Mammary epithelial cell (primary cell): ENCODE measurements at regions of chr5 and their contacts with region 1.

Region 1: DNA sequence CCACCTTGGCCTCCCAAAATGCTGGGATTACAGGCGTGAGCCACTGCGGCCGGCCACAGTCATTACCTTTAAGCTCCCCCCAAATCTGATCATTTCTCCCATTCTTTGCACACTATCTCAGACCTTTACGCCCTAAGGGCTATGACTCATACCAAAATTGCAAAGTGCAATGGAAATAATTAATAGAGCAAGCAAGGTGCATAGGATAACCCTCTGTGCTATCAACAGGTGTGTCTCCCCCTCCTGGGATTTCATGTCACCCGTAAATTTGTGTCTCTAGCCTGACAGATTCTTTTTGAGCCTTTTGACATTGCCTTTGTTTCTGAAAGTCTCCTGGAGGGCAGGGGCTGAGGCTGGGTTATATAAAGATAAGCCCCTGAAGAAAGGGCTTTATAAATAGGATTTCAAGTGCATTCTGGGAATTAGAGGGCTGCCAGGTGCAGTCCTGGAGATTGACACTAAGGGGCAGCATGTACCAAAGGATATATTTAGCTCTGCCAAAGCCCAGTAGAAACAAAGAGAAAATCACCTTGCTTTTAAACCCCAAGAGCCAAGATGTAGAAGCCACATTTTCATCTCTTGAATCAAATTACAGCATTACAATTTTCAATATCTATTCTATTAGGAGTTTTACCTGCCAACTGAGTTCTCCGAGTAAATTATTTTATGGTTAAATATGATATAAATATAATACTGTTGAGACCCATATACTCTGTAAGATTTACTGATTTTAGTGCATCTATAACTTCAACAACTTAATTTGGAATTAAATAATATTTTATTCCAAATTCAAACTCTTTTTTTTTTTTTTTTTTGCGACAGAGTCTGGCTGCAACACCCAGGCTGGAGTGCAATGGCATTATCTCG is 18.2 kb downstream of the S100Z start:
- DNase-seq: peak; percentile 50
- H3K4me3 ChIP-seq: no peak overlapping the region
- H3K27ac ChIP-seq: no peak overlapping the region
- H3K4me1 ChIP-seq: no peaks in the 10 kb centered on the region
- H3K27me3 ChIP-seq: no peaks in the 10 kb centered on the region
- CTCF ChIP-seq: peak; percentile 78 to 86

Region 2: GRCh38 chr5:76601470-76601869 is 266.6 kb before region 1 on chr5:
- CTCF ChIA-PET with region 1: no interaction called
- dilution Hi-C with region 1: no loop called
- in situ Hi-C with region 1: no loop called
- intact Hi-C with region 1: loop called (anchors 5 kb)
- DNase-seq: peak; percentile 46
- H3K4me3 ChIP-seq: no peak overlapping the region
- H3K27ac ChIP-seq: no peak overlapping the region
- H3K4me1 ChIP-seq: no peaks in the 10 kb centered on the region
- H3K27me3 ChIP-seq: no peaks in the 10 kb centered on the region
- CTCF ChIP-seq: peak; percentile 58 to 74

Region 3: GRCh38 chr5:76805850-76806505 is 62.1 kb before region 1 on chr5:
- CTCF ChIA-PET with region 1: no interaction called
- dilution Hi-C with region 1: no loop called
- in situ Hi-C with region 1: no loop called
- intact Hi-C with region 1: no loop called
- DNase-seq: peak; percentile 98
- H3K4me3 ChIP-seq: no peak overlapping the region
- H3K27ac ChIP-seq: peak overlapping the region; percentile 35
- H3K4me1 ChIP-seq: peaks cover 35% of the 10 kb centered on the region
- H3K27me3 ChIP-seq: no peaks in the 10 kb centered on the region
- CTCF ChIP-seq: no peak

Region 4: GRCh38 chr5:77086689-77087483 is 218.8 kb after region 1 on chr5 and contains the start of gene ZBED3:
- CTCF ChIA-PET with region 1: no interaction called
- dilution Hi-C with region 1: no loop called
- in situ Hi-C with region 1: no loop called
- intact Hi-C with region 1: loop called (anchors 5 kb)
- DNase-seq: peak; percentile 54
- H3K4me3 ChIP-seq: peak within 1 kb of the TSS; percentile 64 to 69 (median 66)
- H3K27ac ChIP-seq: no peak within 1 kb of the TSS
- H3K4me1 ChIP-seq: peaks cover 5% of the 10 kb centered on the region
- H3K27me3 ChIP-seq: no peaks in the 10 kb centered on the region
- CTCF ChIP-seq: peak in 1 of 2 donors; percentile 30
- total RNA-seq, gene ZBED3: 2.8 to 3.2 TPM

Region 5: GRCh38 chr5:77143998-77144836 is 276.2 kb after region 1 on chr5:
- CTCF ChIA-PET with region 1: no interaction called
- dilution Hi-C with region 1: no loop called
- in situ Hi-C with region 1: no loop called
- intact Hi-C with region 1: loop called (anchors 5 kb)
- DNase-seq: peak; percentile 46
- H3K4me3 ChIP-seq: no peak overlapping the region
- H3K27ac ChIP-seq: no peak overlapping the region
- H3K4me1 ChIP-seq: no peaks in the 10 kb centered on the region
- H3K27me3 ChIP-seq: peaks cover under 1% of the 10 kb centered on the region
- CTCF ChIP-seq: peak; percentile 86 to 93

Region 6: DNA sequence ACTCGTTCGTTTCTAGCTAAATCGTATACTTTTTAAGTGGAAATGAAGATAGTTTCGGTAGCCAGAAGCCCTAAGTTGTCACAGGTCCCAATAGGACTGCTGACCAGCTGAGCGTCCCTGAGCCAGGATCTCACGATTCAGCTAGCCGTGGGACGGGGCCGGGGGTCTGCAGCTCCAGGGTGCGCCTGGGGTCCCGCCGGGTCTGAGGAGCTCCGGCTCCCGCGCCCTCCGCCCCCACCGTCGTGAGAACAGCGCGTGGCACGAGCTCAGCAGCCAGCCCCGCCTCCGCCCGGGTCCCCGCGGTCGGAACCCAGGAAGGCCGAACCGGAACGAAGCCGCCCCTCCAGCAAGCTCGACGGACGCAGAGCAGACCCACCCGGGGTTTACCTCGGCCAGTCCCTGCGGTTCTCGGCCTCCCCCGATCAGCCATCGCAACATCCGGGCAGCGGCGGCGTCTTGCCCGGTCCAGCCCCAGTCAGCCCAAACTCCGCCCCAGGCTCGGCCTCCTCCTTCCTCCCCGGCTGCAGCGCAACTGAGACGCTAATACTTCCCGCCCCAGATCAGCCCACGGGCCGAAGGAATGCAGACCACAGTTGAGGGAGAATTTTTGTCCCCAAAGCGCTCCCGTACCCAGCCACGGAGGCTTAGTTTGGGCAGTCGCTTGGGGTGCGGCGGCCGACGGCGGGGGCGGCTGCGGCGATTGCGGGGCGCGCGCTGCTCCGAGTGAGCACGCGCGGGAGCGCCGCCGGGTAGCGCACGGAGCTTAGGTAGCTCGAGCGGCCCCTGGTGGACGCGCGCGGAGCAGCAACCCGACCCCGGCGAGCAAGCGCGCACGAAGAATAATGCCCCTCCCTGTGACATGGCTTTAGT is 624.0 kb after region 1 on chr5 and contains the start of gene WDR41:
- CTCF ChIA-PET with region 1: no interaction called
- dilution Hi-C with region 1: no loop called
- in situ Hi-C with region 1: no loop called
- intact Hi-C with region 1: loop called (anchors 5 kb)
- DNase-seq: peak; percentile 95
- H3K4me3 ChIP-seq: peak within 1 kb of the TSS; percentile 96 to 99 (median 98)
- H3K27ac ChIP-seq: peak within 1 kb of the TSS; percentile 99
- H3K4me1 ChIP-seq: peaks cover 21% of the 10 kb centered on the region
- H3K27me3 ChIP-seq: no peaks in the 10 kb centered on the region
- CTCF ChIP-seq: peak; percentile 76 to 84
- total RNA-seq, gene WDR41: 93.7 to 132 TPM